WTC11 (cell line): ENCODE measurements at regions of chr20 and their contacts with region 1.

Region 1: GRCh38 chr20:21808863-21809664 is 103.6 kb downstream of the PAX1 start:
- DNase-seq: peak; percentile 89
- ATAC-seq: peak; percentile 90
- H3K4me3 Mint-ChIP-seq: no peak overlapping the region
- H3K27ac Mint-ChIP-seq: no peak overlapping the region
- H3K4me1 Mint-ChIP-seq: peaks cover 2% of the 10 kb centered on the region; the same call in 1 of the 2 replicates
- H3K27me3 Mint-ChIP-seq: peaks cover 19% of the 10 kb centered on the region
- CTCF ChIP-seq: peak; percentile 99

Region 2: GRCh38 chr20:21702553-21703470 is 106.3 kb before region 1 on chr20:
- CTCF ChIA-PET with region 1: interaction called, 10 read pairs
- POLR2A ChIA-PET with region 1: no interaction called
- DNase-seq: peak; percentile 95
- ATAC-seq: peak; percentile 71
- H3K4me3 Mint-ChIP-seq: peak overlapping the region; percentile 57
- H3K27ac Mint-ChIP-seq: no peak overlapping the region
- H3K4me1 Mint-ChIP-seq: peaks cover 70% of the 10 kb centered on the region
- H3K27me3 Mint-ChIP-seq: peaks cover 98% of the 10 kb centered on the region
- CTCF ChIP-seq: peak; percentile 68; the same call in 1 of the 2 replicates

Region 3: GRCh38 chr20:21820688-21821087 is 11.6 kb after region 1 on chr20:
- CTCF ChIA-PET with region 1: interaction called, 12 read pairs
- POLR2A ChIA-PET with region 1: no interaction called
- DNase-seq: no peak
- ATAC-seq: no peak
- H3K4me3 Mint-ChIP-seq: no peak overlapping the region
- H3K27ac Mint-ChIP-seq: no peak overlapping the region
- H3K4me1 Mint-ChIP-seq: peaks cover 21% of the 10 kb centered on the region
- H3K27me3 Mint-ChIP-seq: no peaks in the 10 kb centered on the region
- CTCF ChIP-seq: no peak

Region 4: DNA sequence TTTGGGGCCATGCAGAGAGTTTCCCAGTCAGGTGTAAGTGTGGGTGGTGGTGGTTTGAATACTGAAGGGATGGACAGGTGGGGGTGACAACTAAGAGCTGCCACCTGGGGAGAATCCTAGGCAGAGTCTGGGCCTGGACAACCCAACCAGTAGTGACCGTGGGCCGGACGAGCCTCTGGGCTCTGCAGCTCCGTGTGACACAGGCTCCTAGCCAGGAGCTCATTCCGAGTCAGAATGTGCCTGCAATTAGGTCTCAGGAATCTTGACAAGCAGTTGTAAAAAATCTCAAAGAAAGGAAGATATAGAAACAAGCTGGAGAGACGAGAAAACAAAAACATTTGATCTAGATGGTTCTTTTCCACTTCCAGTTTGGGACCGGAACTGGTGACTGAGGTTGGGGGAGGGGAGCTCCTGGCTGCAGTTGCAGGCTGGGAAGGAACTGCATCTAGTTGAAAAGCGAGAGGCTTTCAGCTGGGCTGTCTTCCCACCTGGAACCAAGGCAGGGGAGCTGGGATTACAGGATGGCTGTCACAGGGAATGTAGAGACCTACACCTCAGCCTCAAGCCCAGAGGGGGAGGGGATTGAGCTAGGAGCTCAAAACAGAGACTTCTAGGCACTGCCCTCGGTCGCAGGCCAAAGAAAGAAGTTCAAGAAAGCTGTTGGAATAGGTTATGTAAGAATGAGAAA is 53.3 kb after region 1 on chr20:
- CTCF ChIA-PET with region 1: interaction called, 10 read pairs
- POLR2A ChIA-PET with region 1: interaction called, 3 read pairs
- DNase-seq: peak; percentile 56
- ATAC-seq: peak; percentile 97
- H3K4me3 Mint-ChIP-seq: no peak overlapping the region; the same call in 1 of the 2 replicates
- H3K27ac Mint-ChIP-seq: peak overlapping the region; percentile 66
- H3K4me1 Mint-ChIP-seq: peaks cover 13% of the 10 kb centered on the region
- H3K27me3 Mint-ChIP-seq: peaks cover 33% of the 10 kb centered on the region
- CTCF ChIP-seq: no peak

Region 5: GRCh38 chr20:21968486-21968885 is 159.4 kb after region 1 on chr20:
- CTCF ChIA-PET with region 1: no interaction called
- POLR2A ChIA-PET with region 1: no interaction called
- DNase-seq: no peak
- ATAC-seq: 0 out of 2 replicates have a peak, but pooled peaks have one; percentile 32
- H3K4me3 Mint-ChIP-seq: no peak overlapping the region
- H3K27ac Mint-ChIP-seq: no peak overlapping the region
- H3K4me1 Mint-ChIP-seq: peaks cover 5% of the 10 kb centered on the region; the same call in 1 of the 2 replicates
- H3K27me3 Mint-ChIP-seq: no peaks in the 10 kb centered on the region; the same call in 1 of the 2 replicates
- CTCF ChIP-seq: no peak

Region 6: DNA sequence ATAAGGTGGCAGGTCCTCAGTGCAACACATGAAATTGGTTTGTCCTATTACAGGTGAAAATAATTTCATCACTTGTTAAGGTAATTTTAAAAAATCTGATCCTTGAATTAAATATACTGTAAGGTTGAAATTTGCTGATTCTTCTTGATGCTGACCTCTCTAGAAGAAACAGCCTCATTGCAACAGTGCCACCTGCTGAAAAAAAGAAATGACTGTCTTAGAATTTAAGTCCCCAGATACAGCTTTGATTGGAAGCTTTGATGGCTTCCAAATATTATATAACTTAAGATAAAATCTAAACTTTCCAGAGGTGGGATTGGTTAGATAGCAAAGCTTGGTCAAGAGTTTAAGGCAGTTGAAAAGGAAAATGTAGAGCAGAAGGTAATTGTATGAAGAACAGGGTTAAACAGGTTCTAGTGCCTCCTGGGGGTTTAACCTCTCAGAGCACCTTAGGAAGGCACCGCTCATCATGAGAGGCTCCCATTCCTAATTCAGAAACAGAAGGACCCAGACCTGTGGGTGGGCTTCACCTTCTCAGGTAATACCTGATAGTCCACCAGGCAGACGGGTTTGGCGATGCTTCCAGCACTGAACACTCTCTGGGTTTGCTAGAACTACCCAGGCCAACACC is 297.4 kb after region 1 on chr20:
- CTCF ChIA-PET with region 1: interaction called, 19 read pairs
- POLR2A ChIA-PET with region 1: no interaction called
- DNase-seq: no peak
- ATAC-seq: peak; percentile 71
- H3K4me3 Mint-ChIP-seq: no peak overlapping the region
- H3K27ac Mint-ChIP-seq: no peak overlapping the region
- H3K4me1 Mint-ChIP-seq: no peaks in the 10 kb centered on the region
- H3K27me3 Mint-ChIP-seq: no peaks in the 10 kb centered on the region; the same call in 1 of the 2 replicates
- CTCF ChIP-seq: no peak